ENCODE measurements at regions of chr11 and their contacts with region 1.

Region 1: DNA sequence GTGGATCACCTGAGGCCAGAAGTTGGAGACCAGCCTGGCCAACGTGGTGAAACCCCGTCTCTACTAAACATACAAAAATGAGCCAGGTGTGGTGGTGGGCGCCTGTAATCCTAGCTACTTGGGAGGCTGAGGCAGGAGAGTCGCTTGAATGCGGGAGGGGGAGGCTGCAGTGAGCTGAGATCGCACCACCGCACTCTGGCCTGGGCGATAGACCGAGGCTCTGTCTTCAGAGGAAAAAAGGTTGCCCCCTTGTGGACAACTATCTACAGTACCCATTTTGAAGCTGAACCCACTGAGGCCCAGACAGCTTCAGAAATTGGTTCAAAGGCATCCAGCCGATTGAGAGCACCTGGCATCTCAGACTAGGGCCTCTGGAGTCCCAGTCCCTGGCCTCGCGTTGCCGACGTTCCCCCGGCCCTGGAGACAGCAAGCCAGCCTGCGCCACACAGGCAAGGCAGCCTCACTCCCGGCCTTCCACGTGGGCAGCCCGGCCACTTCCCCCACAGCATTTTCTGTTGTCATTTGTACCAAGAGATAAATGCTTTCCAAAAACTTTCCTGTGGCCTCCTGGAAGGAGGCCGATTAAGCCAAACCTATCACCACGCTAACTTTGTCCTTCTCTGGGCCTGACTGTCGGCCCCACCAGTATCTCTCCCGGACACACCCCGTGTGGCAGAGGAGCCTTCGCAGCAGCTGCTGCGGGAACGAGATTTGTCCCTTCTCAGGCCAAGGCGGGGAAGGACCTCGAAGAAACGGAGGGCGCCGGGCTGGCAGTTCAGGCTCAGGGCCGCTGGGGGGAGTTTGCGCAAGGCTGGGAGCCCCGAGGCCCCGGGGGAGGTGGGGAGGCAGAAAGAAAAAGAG is 82.8 kb downstream of the FLI1 start:
- DNase-seq: peak in 1 of 2 experiments; percentile 85
- H3K4me3 ChIP-seq: peak overlapping the region in 1 of 4 experiments; percentile 38; a peak in 3 of 8 replicates
- H3K27ac ChIP-seq: no peak overlapping the region
- H3K4me1 ChIP-seq: peaks cover 0 to 9% (median 4%) of the 10 kb centered on the region in 4 experiments; a peak in 4 of 7 replicates
- H3K27me3 ChIP-seq: peaks cover 0 to 6% (median 5%) of the 10 kb centered on the region in 4 experiments; a peak in 5 of 7 replicates
- CTCF ChIP-seq: peak; percentile 68 to 87 (median 85)
- EP300 ChIP-seq: no peak
- POLR2A ChIP-seq: no peak
- RAD21 ChIP-seq: peak; percentile 51 to 70

Region 2: DNA sequence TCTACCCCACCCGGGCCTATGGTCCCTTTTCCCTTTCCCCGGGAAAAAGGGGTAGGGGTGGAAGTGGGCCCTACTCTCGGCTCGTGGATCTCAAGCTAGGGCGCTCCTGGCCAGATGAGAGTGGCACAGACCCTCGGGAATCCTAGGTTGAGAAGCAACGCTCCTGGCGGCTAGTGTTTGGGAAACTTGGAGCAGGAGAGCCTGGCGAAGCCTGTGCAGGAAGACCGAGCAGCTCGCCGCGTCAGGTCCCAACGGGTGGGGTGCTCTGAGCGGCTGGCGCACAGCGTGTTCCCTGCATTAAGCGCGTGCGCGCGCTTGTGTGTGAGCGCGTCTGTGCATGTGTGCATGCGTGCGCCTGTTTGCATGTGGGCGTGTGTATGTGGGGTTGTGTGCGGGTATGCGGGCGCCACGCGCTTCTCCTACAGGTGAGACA is 89.9 kb before region 1 on chr11:
- CTCF ChIA-PET with region 1: interaction called, 13 read pairs
- POLR2A ChIA-PET with region 1: interaction called, 3 read pairs
- DNase-seq: peak in 1 of 2 experiments; percentile 71
- H3K4me3 ChIP-seq: peak overlapping the region; percentile 20 to 60 (median 42); a peak in 7 of 8 replicates
- H3K27ac ChIP-seq: no peak overlapping the region
- H3K4me1 ChIP-seq: peaks cover 12 to 50% (median 31%) of the 10 kb centered on the region in 4 experiments
- H3K27me3 ChIP-seq: peaks cover 81 to 100% (median 98%) of the 10 kb centered on the region in 4 experiments
- CTCF ChIP-seq: no peak
- EP300 ChIP-seq: no peak
- POLR2A ChIP-seq: no peak
- RAD21 ChIP-seq: no peak

Region 3: DNA sequence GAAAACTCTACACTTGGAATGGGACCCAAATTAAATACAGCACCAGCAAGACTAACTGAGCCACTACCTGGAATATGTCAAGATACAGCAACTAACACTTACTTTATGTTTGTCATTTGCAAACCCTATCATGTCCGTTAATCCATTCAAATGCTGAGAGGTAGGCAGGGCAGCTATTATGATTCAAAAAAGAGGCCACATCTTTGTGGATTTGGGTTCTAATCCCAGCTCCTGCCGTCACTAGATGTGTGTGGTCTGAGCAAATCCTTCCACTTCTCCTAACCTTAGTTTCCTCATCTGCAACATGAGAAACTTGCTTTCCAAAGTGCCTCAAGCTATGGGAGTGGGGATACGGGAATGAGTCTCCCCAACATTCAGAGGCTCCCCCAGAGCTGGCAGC is 58.6 kb before region 1 on chr11:
- CTCF ChIA-PET with region 1: interaction called, 10 read pairs
- POLR2A ChIA-PET with region 1: no interaction called
- DNase-seq: no peak
- H3K4me3 ChIP-seq: no peak overlapping the region
- H3K27ac ChIP-seq: no peak overlapping the region
- H3K4me1 ChIP-seq: peaks cover 5 to 25% (median 22%) of the 10 kb centered on the region in 4 experiments
- H3K27me3 ChIP-seq: peaks cover 0 to 2% (median 0%) of the 10 kb centered on the region in 4 experiments; a peak in 2 of 7 replicates
- CTCF ChIP-seq: no peak
- EP300 ChIP-seq: no peak
- POLR2A ChIP-seq: no peak
- RAD21 ChIP-seq: no peak

Region 4: DNA sequence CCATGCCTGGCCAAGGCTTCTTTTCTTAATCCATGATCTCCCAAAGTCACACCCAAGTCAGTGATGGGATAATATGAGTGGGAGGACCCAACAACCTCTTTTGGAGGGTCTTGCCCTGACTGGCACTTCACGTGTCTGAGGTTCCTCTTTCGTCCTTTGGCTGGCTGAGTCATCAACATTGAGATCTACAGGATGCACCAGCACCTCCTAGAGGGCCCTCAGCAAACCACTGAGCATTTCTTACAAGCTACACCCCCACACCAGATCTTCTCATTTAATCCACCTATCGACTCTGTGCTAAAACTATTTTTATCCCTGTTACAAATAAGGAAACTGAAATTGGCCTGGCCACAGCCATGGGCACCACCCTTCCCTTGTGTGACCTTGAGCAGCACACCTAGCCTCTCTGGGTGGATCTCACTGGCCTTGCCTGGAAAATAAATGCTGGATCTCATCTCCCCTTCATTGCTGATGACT is 19.4 kb before region 1 on chr11:
- CTCF ChIA-PET with region 1: interaction called, 48 read pairs
- POLR2A ChIA-PET with region 1: no interaction called
- DNase-seq: no peak
- H3K4me3 ChIP-seq: no peak overlapping the region
- H3K27ac ChIP-seq: no peak overlapping the region
- H3K4me1 ChIP-seq: peaks cover 0 to 3% (median 0%) of the 10 kb centered on the region in 4 experiments; a peak in 1 of 7 replicates
- H3K27me3 ChIP-seq: no peaks in the 10 kb centered on the region; a peak in 1 of 7 replicates
- CTCF ChIP-seq: peak; percentile 41 to 79 (median 64)
- EP300 ChIP-seq: no peak
- POLR2A ChIP-seq: no peak
- RAD21 ChIP-seq: peak; percentile 75 to 81

Region 5: GRCh38 chr11:128790196-128790595 is 13.5 kb after region 1 on chr11:
- CTCF ChIA-PET with region 1: interaction called, 99 read pairs
- POLR2A ChIA-PET with region 1: interaction called, 6 read pairs
- DNase-seq: no peak
- H3K4me3 ChIP-seq: no peak overlapping the region
- H3K27ac ChIP-seq: no peak overlapping the region
- H3K4me1 ChIP-seq: peaks cover 0 to 9% (median 2%) of the 10 kb centered on the region in 4 experiments; a peak in 3 of 7 replicates
- H3K27me3 ChIP-seq: no peaks in the 10 kb centered on the region
- CTCF ChIP-seq: no peak
- EP300 ChIP-seq: no peak
- POLR2A ChIP-seq: no peak
- RAD21 ChIP-seq: no peak

Region 6: GRCh38 chr11:128831174-128832120 is 54.8 kb after region 1 on chr11:
- CTCF ChIA-PET with region 1: interaction called, 147 read pairs
- POLR2A ChIA-PET with region 1: no interaction called
- DNase-seq: peak; percentile 66 to 91
- H3K4me3 ChIP-seq: no peak overlapping the region
- H3K27ac ChIP-seq: no peak overlapping the region
- H3K4me1 ChIP-seq: no peaks in the 10 kb centered on the region
- H3K27me3 ChIP-seq: peaks cover 0 to 3% (median 0%) of the 10 kb centered on the region in 4 experiments; a peak in 3 of 7 replicates
- CTCF ChIP-seq: peak; percentile 86 to 92 (median 88)
- EP300 ChIP-seq: no peak
- POLR2A ChIP-seq: no peak
- RAD21 ChIP-seq: peak; percentile 94 to 97